Heart right ventricle (tissue), 16 donors: ENCODE measurements at regions of chr15 and their contacts with region 1.

Region 1: GRCh38 chr15:43872416-43873020 is 45.7 kb downstream of the WDR76 start:
- DNase-seq: peak in 1 of 2 donors; percentile 57
- ATAC-seq: peak; percentile 65 to 81 (median 70)
- H3K4me3 ChIP-seq: no peak overlapping the region
- H3K27ac ChIP-seq: peak overlapping the region in 1 of 10 donors; percentile 36
- H3K4me1 ChIP-seq: peaks cover 0 to 53% (median 3%) of the 10 kb centered on the region in 9 donors
- H3K27me3 ChIP-seq: no peaks in the 10 kb centered on the region
- CTCF ChIP-seq: peak in 8 of 9 donors; percentile 18 to 67 (median 62)

Region 2: DNA sequence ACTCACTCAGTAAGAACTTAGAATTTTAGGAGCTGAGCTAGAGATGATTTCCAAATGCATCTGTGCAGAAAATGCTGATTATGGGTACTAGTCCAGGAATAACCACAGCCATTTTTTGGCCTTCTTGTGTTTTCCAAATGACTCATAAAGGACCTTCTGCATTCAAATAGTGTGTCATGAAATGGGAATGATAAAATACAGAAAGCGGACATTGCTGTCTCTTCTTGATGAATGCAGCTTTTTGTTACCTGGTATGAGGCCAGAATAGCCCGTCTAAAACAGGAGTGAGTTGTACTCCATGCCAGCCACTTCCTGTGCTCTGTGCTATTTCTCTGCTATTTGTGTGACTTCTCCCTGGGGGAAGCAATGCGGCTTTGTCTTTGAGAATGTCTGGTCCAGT is 343.1 kb after region 1 on chr15:
- intact Hi-C with region 1: loop called in 2 of 10 experiments (anchors 10 kb)
- DNase-seq: no peak
- ATAC-seq: no peak
- H3K4me3 ChIP-seq: no peak overlapping the region
- H3K27ac ChIP-seq: no peak overlapping the region
- H3K4me1 ChIP-seq: no peaks in the 10 kb centered on the region
- H3K27me3 ChIP-seq: peaks cover 0 to 14% (median 3%) of the 10 kb centered on the region in 7 donors
- CTCF ChIP-seq: no peak